Kidney (tissue), 22 donors: ENCODE measurements at regions of chr14 and their contacts with region 1.

Region 1: GRCh38 chr14:25049568-25050268 is at the start of gene STXBP6:
- DNase-seq: peak; percentile 81 to 93 (median 84)
- H3K4me3 ChIP-seq: peak within 1 kb of the TSS; percentile 41 to 57 (median 42)
- H3K27ac ChIP-seq: peak within 1 kb of the TSS in 1 of 2 donors; percentile 23
- H3K4me1 ChIP-seq: peaks cover 0 to 7% (median 0%) of the 10 kb centered on the region in 3 donors
- H3K27me3 ChIP-seq: peaks cover 8% of the 10 kb centered on the region
- CTCF ChIP-seq: no peak
- total RNA-seq, gene STXBP6: 3.9 TPM

Region 2: GRCh38 chr14:24806061-24806678 is 243.5 kb before region 1 on chr14:
- intact Hi-C with region 1: loop called (anchors 10 kb)
- DNase-seq: peak in 4 of 5 donors; percentile 83 to 86 (median 86)
- H3K4me3 ChIP-seq: no peak overlapping the region
- H3K27ac ChIP-seq: no peak overlapping the region
- H3K4me1 ChIP-seq: no peaks in the 10 kb centered on the region
- H3K27me3 ChIP-seq: no peaks in the 10 kb centered on the region
- CTCF ChIP-seq: peak; percentile 90